ENCODE measurements at regions of chr19 and their contacts with region 1.

Region 1: GRCh38 chr19:46753420-46754155 is 7.3 kb upstream of the STRN4 start:
- DNase-seq: peak in 1 of 10 donors; percentile 84
- H3K4me3 ChIP-seq: no peak overlapping the region
- H3K27ac ChIP-seq: peak overlapping the region in 2 of 59 donors; percentile 2 to 18
- H3K27me3 ChIP-seq: no peaks in the 10 kb centered on the region
- CTCF ChIP-seq: peak in 49 of 56 donors; percentile 11 to 59 (median 36)

Region 2: DNA sequence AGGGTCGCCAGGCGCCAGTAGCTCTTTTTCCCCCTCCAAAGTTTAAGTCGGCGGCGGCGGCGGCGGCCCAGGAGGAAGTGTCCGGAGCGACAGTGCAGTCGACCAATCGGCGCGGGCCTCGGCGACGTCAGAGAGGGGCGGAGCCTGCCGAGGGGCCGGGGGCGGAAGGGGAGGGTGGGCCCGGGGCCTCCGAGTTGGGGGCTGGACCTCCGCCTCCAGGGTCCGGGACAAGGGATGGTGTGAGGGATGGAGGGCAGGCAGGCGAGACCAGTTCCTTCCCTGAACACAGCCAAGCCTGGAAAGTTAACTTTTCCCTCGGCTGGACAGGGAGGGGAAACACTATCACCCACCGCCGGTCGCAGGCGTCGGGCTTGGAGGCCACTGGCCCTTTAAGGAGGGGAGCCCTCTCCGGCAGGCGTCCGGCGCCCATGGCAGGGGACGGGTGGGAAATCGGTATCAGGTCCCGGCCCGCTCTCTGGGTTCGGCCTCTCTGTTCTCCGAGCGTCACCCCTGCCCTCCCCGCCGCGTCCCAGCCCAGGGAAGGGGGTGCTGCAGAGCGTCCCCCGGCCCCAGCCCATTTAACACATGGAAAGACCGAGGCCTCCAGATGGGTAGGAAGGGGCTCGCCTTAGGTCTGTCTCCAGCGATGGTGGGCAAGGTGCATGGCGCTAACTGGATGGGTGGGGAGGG is 36.4 kb before region 1 on chr19 and contains the start of gene PRKD2:
- intact Hi-C with region 1: no loop called
- DNase-seq: peak; percentile 37 to 90 (median 81)
- H3K4me3 ChIP-seq: peak within 1 kb of the TSS; percentile 49 to 93 (median 70)
- H3K27ac ChIP-seq: peak within 1 kb of the TSS in 54 of 59 donors; percentile 18 to 95 (median 80)
- H3K27me3 ChIP-seq: no peaks in the 10 kb centered on the region
- CTCF ChIP-seq: peak in 2 of 56 donors; percentile 12 to 13
- total RNA-seq, gene PRKD2: 6.8 to 37.3 (median 13.5) TPM

Region 3: GRCh38 chr19:46840136-46840942 is 86.8 kb after region 1 on chr19:
- intact Hi-C with region 1: loop called (anchors 1 kb)
- DNase-seq: peak in 3 of 10 donors; percentile 28 to 58 (median 42)
- H3K4me3 ChIP-seq: peak overlapping the region in 1 of 59 donors; percentile 12
- H3K27ac ChIP-seq: peak overlapping the region in 42 of 59 donors; percentile 1 to 79 (median 57)
- H3K27me3 ChIP-seq: no peaks in the 10 kb centered on the region
- CTCF ChIP-seq: peak; percentile 70 to 90 (median 80)

Region 4: GRCh38 chr19:46990991-46991676 is 237.5 kb after region 1 on chr19:
- intact Hi-C with region 1: loop called (anchors 5 to 10 kb)
- DNase-seq: peak; percentile 71 to 90 (median 86)
- H3K4me3 ChIP-seq: peak overlapping the region in 12 of 59 donors; percentile 3 to 28 (median 16)
- H3K27ac ChIP-seq: peak overlapping the region in 58 of 59 donors; percentile 25 to 87 (median 75)
- H3K27me3 ChIP-seq: no peaks in the 10 kb centered on the region
- CTCF ChIP-seq: peak; percentile 84 to 97 (median 91)

Region 5: DNA sequence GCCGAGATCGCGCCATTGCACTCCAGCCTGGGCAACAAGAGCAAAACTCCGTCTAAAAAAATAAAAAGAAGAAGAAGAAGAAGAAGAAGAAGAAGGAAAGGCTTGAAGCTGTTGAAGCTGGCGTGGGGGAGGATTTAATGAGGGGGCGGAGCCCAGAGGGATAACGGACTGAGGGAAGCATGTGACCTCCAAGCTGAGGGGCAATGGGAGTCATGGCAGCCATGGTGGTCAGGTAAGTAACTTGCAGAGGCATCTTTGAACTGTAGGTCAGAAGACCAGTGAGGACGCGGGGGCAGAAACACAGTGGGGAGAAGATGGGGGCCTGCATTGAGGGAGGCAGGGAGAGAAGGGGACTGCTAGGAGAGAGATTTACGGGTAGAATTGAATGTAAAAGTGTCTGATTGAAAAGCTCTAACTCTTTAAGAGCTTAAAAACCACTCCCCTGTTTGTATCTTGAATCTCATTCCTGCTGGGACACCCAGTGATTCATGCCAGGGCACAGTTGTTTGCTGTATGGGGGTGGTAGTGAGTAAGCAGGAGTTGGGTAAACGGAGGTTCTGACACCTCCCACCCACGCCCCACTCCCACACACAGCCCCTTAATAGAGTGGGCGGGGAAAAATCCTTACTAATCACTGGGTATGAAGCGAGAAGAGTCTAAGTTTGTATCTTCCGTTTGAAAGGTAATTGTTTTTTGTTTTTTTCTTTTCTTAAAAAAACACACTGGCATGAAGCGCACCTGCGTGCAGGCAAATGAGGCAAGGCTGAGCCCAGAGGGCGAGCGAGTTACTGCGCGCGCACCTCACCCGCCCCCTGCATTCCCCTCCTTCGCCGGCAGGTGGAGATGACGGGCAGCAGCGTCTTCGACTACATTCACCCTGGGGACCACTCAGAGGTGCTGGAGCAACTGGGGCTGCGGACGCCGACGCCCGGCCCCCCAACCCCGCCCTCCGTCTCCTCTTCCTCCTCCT is 281.8 kb after region 1 on chr19:
- intact Hi-C with region 1: loop called in 1 of 2 experiments (anchors 10 kb)
- DNase-seq: peak; percentile 69 to 93 (median 88)
- H3K4me3 ChIP-seq: peak overlapping the region; percentile 34 to 70 (median 52)
- H3K27ac ChIP-seq: peak overlapping the region in 46 of 59 donors; percentile 2 to 83 (median 66)
- H3K27me3 ChIP-seq: peaks cover 0 to 12% (median 0%) of the 10 kb centered on the region in 45 donors
- CTCF ChIP-seq: peak; percentile 87 to 99 (median 97)

Region 6: DNA sequence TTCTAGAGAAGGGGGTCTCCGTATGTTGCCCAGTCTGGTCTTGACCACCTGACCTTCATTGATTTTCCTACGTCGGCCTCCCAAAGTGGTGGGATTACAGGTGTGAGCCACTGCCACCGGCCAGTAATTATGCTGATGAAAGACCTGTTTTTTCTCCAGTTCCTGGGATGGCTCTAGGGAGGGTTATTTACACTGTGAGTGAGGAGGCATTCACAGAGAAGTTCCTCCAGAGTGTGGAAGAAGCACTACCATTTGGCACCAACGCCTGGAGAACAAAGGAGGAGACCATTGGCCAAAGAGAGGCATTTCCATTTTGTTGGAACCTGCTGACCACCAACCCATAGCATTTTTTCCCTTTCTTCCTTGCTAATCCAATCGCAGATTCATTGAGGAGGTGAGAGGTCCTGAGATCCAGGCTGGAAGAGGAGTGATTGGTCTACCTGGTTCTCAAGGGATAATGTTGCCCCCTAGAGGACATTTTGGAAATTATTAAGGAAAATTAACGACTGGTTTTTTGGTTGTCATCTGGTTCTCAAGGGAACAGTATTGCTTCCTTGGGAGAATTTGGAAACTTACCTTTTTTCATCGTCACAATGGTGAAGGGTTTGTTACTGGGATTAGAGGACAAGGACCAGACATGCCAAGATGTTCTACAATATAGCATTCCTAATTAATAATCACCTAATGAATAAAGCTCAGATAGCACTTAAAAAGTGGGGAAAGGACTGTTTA is 371.5 kb after region 1 on chr19:
- intact Hi-C with region 1: loop called in 1 of 2 experiments (anchors 10 kb)
- DNase-seq: no peak
- H3K4me3 ChIP-seq: no peak overlapping the region
- H3K27ac ChIP-seq: no peak overlapping the region
- H3K27me3 ChIP-seq: no peaks in the 10 kb centered on the region
- CTCF ChIP-seq: peak; percentile 62 to 92 (median 78)

Measured in dorsolateral prefrontal cortex (tissue), 120 donors.